PC-3 (cell line): ENCODE measurements at regions of chr3 and their contacts with region 1.

Region 1: GRCh38 chr3:47273564-47273963 is 9.0 kb downstream of the KIF9 start:
- DNase-seq: no peak
- ATAC-seq: no peak
- H3K4me3 ChIP-seq: no peak overlapping the region
- H3K27ac ChIP-seq: no peak overlapping the region
- H3K4me1 ChIP-seq: no peaks in the 10 kb centered on the region
- H3K27me3 ChIP-seq: no peaks in the 10 kb centered on the region
- CTCF ChIP-seq: no peak; the same call in 1 of the 2 replicates

Region 2: GRCh38 chr3:47186285-47186684 is 87.3 kb before region 1 on chr3:
- CTCF ChIA-PET with region 1: no interaction called
- POLR2A ChIA-PET with region 1: no interaction called
- intact Hi-C with region 1: no loop called
- DNase-seq: no peak
- ATAC-seq: no peak
- H3K4me3 ChIP-seq: no peak overlapping the region
- H3K27ac ChIP-seq: no peak overlapping the region
- H3K4me1 ChIP-seq: no peaks in the 10 kb centered on the region
- H3K27me3 ChIP-seq: no peaks in the 10 kb centered on the region
- CTCF ChIP-seq: no peak

Region 3: GRCh38 chr3:47296562-47297302 is 23.2 kb after region 1 on chr3:
- CTCF ChIA-PET with region 1: no interaction called
- POLR2A ChIA-PET with region 1: interaction called, 22 read pairs
- intact Hi-C with region 1: no loop called
- DNase-seq: no peak
- ATAC-seq: no peak
- H3K4me3 ChIP-seq: no peak overlapping the region
- H3K27ac ChIP-seq: no peak overlapping the region
- H3K4me1 ChIP-seq: no peaks in the 10 kb centered on the region
- H3K27me3 ChIP-seq: no peaks in the 10 kb centered on the region
- CTCF ChIP-seq: no peak

Region 4: GRCh38 chr3:47781685-47782445 is 508.3 kb after region 1 on chr3 and contains the start of gene SMARCC1:
- CTCF ChIA-PET with region 1: no interaction called
- POLR2A ChIA-PET with region 1: no interaction called
- intact Hi-C with region 1: no loop called
- DNase-seq: peak; percentile 99
- ATAC-seq: peak; percentile 87
- H3K4me3 ChIP-seq: peak within 1 kb of the TSS; percentile 82
- H3K27ac ChIP-seq: peak within 1 kb of the TSS; percentile 82
- H3K4me1 ChIP-seq: peaks cover 20% of the 10 kb centered on the region
- H3K27me3 ChIP-seq: no peaks in the 10 kb centered on the region
- CTCF ChIP-seq: no peak
- total RNA-seq, gene SMARCC1: 43.1 and 53.0 TPM in 2 replicates